ENCODE measurements at regions of chr6 and their contacts with region 1.

Region 1: GRCh38 chr6:30717042-30717844 is at the start of gene MDC1:
- DNase-seq: peak; percentile 99
- H3K4me3 ChIP-seq: peak within 1 kb of the TSS; percentile 50 to 69 (median 60)
- H3K27ac ChIP-seq: peak within 1 kb of the TSS; percentile 93 to 99 (median 98)
- H3K4me1 ChIP-seq: peaks cover 4 to 38% (median 34%) of the 10 kb centered on the region in 4 donors
- H3K27me3 ChIP-seq: no peaks in the 10 kb centered on the region
- CTCF ChIP-seq: peak; percentile 17 to 79 (median 43)
- EP300 ChIP-seq: no peak
- POLR2A ChIP-seq: peak; percentile 91
- total RNA-seq, gene MDC1: 3.1 to 13.5 (median 9.7) TPM

Region 2: GRCh38 chr6:30616811-30617564 is 100.3 kb before region 1 on chr6 and contains the start of gene PPP1R10:
- in situ Hi-C with region 1: no loop called
- intact Hi-C with region 1: loop called (anchors 5 kb)
- DNase-seq: peak; percentile 99
- H3K4me3 ChIP-seq: peak within 1 kb of the TSS; percentile 63 to 76 (median 70)
- H3K27ac ChIP-seq: peak within 1 kb of the TSS; percentile 94 to 98 (median 96)
- H3K4me1 ChIP-seq: peaks cover 14 to 43% (median 36%) of the 10 kb centered on the region in 4 donors
- H3K27me3 ChIP-seq: no peaks in the 10 kb centered on the region
- CTCF ChIP-seq: no peak
- EP300 ChIP-seq: no peak
- POLR2A ChIP-seq: peak; percentile 100
- total RNA-seq, gene PPP1R10: 35.5 to 62.5 (median 53.8) TPM

Region 3: DNA sequence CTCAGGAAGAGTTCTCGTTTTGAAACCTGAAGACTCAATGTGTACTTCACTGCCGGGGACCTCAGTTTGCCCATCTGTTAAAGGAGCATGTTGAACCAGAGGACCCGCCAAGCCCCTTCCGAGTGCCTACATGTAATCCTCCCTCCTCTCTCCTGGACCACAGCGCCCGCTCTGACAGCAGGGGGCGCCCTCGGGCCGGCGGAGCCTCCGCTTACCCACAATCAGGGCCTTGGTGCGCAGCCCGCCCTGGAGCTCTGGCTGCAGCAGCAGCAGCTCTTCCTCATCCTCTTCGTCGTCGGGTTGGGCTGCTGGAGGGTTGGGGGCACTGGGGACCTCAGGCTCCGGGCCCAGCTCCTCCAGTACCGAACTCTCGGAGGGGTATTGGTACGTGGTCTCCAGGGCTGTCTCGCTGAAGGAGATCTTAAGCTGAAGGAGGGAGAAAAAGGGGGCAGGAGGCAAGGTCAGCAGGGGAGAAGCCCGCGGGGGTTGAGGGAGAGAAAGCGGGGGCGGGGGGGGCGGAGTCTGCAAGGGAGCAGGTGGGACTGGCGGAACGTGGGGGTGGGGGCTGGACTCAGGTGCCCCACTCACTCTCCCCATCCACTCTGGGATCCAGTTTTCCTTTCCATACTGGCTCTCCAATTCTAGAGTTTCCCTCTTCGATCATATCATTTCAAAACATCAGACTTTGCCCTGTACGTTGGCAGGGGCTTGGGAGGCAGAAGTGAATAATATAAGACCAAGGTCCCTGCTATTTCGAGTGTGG is 38.1 kb before region 1 on chr6:
- in situ Hi-C with region 1: loop called in 2 of 4 experiments (anchors 5 kb)
- intact Hi-C with region 1: loop called (anchors 1 kb)
- DNase-seq: peak; percentile 91
- H3K4me3 ChIP-seq: peak overlapping the region in 1 of 4 donors; percentile 72
- H3K27ac ChIP-seq: peak overlapping the region; percentile 93 to 99 (median 96)
- H3K4me1 ChIP-seq: peaks cover 0 to 54% (median 32%) of the 10 kb centered on the region in 4 donors
- H3K27me3 ChIP-seq: no peaks in the 10 kb centered on the region
- CTCF ChIP-seq: peak; percentile 96 to 99 (median 96)
- EP300 ChIP-seq: no peak
- POLR2A ChIP-seq: no peak

Region 4: GRCh38 chr6:30686908-30687658 is 30.2 kb before region 1 on chr6:
- in situ Hi-C with region 1: loop called in 2 of 4 experiments (anchors 5 kb)
- intact Hi-C with region 1: loop called (anchors 2 kb)
- DNase-seq: peak; percentile 90
- H3K4me3 ChIP-seq: peak overlapping the region; percentile 63 to 81 (median 68)
- H3K27ac ChIP-seq: peak overlapping the region; percentile 93 to 99 (median 96)
- H3K4me1 ChIP-seq: peaks cover 6 to 80% (median 34%) of the 10 kb centered on the region in 4 donors
- H3K27me3 ChIP-seq: no peaks in the 10 kb centered on the region
- CTCF ChIP-seq: no peak
- EP300 ChIP-seq: peak; percentile 60
- POLR2A ChIP-seq: no peak

Region 5: GRCh38 chr6:30877419-30878371 is 160.5 kb after region 1 on chr6:
- in situ Hi-C with region 1: loop called in 1 of 4 experiments (anchors 10 kb)
- intact Hi-C with region 1: no loop called
- DNase-seq: peak; percentile 93
- H3K4me3 ChIP-seq: peak overlapping the region in 3 of 4 donors; percentile 17 to 53 (median 30)
- H3K27ac ChIP-seq: peak overlapping the region; percentile 85 to 87 (median 87)
- H3K4me1 ChIP-seq: peaks cover 11 to 38% (median 19%) of the 10 kb centered on the region in 4 donors
- H3K27me3 ChIP-seq: no peaks in the 10 kb centered on the region
- CTCF ChIP-seq: peak; percentile 86 to 98 (median 89)
- EP300 ChIP-seq: no peak
- POLR2A ChIP-seq: no peak

Measured in transverse colon (tissue), 4 donors.